AG04449 (cell line): ENCODE measurements at regions of chr2 and their contacts with region 1.

Region 1: GRCh38 chr2:38740851-38741731 is 10.1 kb downstream of the SRSF7 start:
- DNase-seq: no peak
- H3K4me3 ChIP-seq: no peak overlapping the region
- CTCF ChIP-seq: no peak

Region 2: DNA sequence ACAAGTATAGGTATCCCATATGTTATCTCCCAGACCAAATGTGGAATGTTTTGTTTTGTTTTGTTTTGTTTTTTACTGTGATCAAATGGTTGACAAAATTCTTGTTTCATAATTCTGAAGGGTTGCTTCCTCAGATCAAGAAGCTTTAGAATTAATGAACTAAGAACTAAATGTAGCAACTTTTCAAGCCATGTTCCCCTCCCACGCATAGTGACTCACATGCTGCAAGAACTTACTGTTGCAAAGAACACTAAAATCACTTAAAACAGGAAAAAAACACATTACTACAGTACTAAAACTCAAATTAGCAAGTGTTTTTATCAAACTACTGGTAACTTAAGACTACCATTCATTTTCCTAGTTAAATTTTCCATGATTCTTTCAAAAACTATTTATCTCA is 168.9 kb before region 1 on chr2:
- CTCF ChIA-PET with region 1: interaction called, 14 read pairs
- POLR2A ChIA-PET with region 1: no interaction called
- DNase-seq: peak; percentile 23
- H3K4me3 ChIP-seq: no peak overlapping the region
- CTCF ChIP-seq: no peak

Region 3: DNA sequence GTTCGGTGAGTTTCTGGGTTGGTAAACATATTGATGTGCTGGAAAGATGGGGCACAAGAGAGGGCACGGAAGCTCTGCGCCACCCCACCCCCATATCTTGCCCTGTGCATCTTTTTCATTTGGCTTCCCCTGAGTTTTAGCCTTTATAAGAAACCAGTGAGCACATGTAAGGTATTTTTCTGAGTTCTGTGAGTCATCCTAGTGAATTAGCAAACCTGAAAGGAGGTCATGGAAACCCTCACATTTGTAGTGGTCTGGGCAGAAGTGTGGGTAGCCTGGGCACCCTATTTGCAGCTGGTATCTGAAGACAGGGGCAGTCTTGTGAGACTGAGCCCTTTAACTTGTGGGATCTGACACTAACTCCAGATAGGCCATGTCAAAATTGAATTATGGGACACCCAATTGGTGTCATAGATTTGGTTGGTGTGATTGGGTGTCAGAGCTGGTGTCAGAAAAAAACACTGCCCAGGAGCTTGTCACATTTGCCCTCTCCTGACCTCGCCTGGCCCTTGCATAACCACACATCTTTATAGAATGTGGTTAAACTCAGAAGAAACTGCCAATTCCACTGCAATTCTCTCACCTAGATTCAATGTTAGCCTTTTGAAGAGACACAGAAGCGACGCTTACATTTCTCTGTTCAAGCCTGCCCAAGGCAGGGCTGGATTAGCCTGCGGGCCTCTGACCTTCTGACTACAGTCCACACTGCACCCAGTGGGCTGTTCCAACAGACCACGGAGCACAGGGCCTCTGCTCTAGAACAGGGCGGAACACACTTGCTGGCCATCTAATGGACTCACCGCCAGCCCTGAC is 87.2 kb before region 1 on chr2:
- CTCF ChIA-PET with region 1: no interaction called
- POLR2A ChIA-PET with region 1: no interaction called
- DNase-seq: no peak
- H3K4me3 ChIP-seq: no peak overlapping the region
- CTCF ChIP-seq: no peak

Region 4: GRCh38 chr2:38728694-38729093 is 12.4 kb before region 1 on chr2:
- CTCF ChIA-PET with region 1: interaction called, 17 read pairs
- POLR2A ChIA-PET with region 1: no interaction called
- DNase-seq: no peak
- H3K4me3 ChIP-seq: no peak overlapping the region
- CTCF ChIP-seq: no peak